GM13977 (cell line): ENCODE measurements at regions of chr14 and their contacts with region 1.

Region 1: GRCh38 chr14:73564889-73565288 is 4.1 kb upstream of the ACOT2 start:
- DNase-seq: no peak
- CTCF ChIP-seq: no peak

Region 2: DNA sequence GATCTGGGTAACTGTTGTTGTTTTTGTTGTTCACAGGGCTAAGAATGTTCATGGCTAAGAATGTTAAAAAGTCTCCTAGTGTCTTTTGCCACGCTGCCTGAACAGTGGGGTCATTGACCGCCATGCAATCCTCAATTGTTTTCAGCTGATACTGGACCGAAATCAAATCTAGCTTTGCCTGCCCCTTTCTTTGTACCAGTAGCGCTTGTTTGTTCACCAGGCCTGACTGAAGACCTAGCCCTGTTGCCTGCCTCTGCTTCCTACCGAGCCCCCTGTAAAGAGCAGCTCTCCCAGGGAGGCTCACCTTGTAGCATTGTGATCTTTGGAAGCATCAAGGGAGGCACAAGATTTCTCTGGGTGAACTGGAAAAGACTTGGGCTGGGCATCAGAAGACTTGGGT is 421.9 kb before region 1 on chr14:
- in situ Hi-C with region 1: no loop called
- DNase-seq: no peak
- CTCF ChIP-seq: no peak

Region 3: DNA sequence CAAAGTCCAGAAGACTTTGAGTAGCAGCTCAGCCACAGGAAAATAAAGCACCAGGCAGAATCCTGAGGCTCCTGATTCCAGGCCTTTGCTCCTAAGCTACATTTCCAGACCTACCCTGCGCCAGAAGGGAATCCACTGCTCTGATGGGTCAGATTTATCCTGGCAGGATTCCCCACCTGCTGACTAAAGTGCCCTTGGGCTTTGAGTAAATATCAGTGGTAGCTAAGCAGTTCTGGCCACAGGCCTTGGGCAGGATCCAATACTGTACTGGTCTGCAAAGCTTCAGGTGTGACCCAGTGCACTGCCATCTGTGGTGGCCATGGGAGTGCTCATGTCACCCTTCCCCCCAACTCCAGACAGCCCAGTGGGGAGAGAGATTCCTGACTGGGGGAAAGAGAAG is 38.3 kb before region 1 on chr14:
- in situ Hi-C with region 1: loop called (anchors 5 kb)
- DNase-seq: no peak
- CTCF ChIP-seq: no peak

Region 4: GRCh38 chr14:73825551-73826188 is 260.8 kb after region 1 on chr14:
- in situ Hi-C with region 1: no loop called
- DNase-seq: peak; percentile 78
- CTCF ChIP-seq: peak; percentile 92

Region 5: GRCh38 chr14:73851644-73852382 is 286.9 kb after region 1 on chr14 and contains the start of gene PTGR2:
- in situ Hi-C with region 1: no loop called
- DNase-seq: peak; percentile 94
- CTCF ChIP-seq: no peak